Activated CD8-positive, alpha-beta T cell treated with anti-CD3 and anti-CD28 coated beads for 36 hours (primary cell): ENCODE measurements at regions of chr7 and their contacts with region 1.

Region 1: DNA sequence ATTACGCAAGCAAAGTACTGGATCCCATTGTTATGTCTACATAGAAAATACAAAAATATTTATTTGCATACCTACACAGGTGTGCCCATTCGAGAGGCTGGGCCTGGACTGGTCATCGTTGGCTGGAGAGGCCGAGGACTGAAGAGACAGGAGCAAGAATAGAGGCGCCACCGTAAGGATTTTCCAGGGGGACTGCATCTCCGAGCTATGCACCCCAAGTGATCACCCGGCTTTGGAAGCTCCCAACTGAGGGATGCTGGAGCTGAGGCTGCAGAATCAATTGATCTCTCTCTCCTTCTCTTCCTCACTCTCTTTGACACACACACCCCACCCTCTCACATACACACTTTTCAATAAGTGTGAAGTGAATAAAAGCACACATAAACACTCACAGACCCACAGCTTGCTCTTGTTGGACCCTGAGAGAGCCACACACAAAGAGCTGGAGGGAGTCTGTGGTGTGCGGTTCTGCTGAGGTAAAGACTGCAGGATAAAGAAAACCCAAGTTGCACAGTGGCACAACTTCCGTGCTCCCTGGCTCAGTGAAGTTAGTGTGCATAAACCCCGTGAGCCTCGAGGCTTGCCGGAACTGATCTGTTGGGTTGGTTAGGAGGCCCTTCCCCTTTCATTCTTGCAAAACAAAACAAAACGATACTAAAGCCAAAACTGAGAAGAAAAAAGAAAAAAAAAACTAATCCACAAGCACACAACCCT is at the start of gene AOAH:
- DNase-seq: peak; percentile 92
- ATAC-seq: peak; percentile 84
- H3K4me3 Mint-ChIP-seq: peak within 1 kb of the TSS; percentile 78
- H3K27ac Mint-ChIP-seq: peak within 1 kb of the TSS; percentile 88
- H3K4me1 Mint-ChIP-seq: peaks cover 78% of the 10 kb centered on the region
- H3K27me3 Mint-ChIP-seq: no peaks in the 10 kb centered on the region
- CTCF ChIP-seq: no peak
- total RNA-seq, gene AOAH: 10.4 to 17.1 TPM

Region 2: GRCh38 chr7:36677769-36678437 is 46.2 kb before region 1 on chr7:
- CTCF ChIA-PET with region 1: interaction called, 17 read pairs
- POLR2A ChIA-PET with region 1: interaction called, 19 read pairs
- intact Hi-C with region 1: loop called (anchors 5 kb)
- DNase-seq: peak; percentile 91
- ATAC-seq: peak; percentile 88
- H3K4me3 Mint-ChIP-seq: peak overlapping the region; percentile 56
- H3K27ac Mint-ChIP-seq: peak overlapping the region; percentile 94
- H3K4me1 Mint-ChIP-seq: peaks cover 76% of the 10 kb centered on the region
- H3K27me3 Mint-ChIP-seq: no peaks in the 10 kb centered on the region
- CTCF ChIP-seq: no peak

Region 3: GRCh38 chr7:36683695-36684357 is 40.3 kb before region 1 on chr7:
- CTCF ChIA-PET with region 1: interaction called, 17 read pairs
- POLR2A ChIA-PET with region 1: interaction called, 19 read pairs
- intact Hi-C with region 1: loop called (anchors 5 kb)
- DNase-seq: peak; percentile 33
- ATAC-seq: peak; percentile 75
- H3K4me3 Mint-ChIP-seq: no peak overlapping the region
- H3K27ac Mint-ChIP-seq: peak overlapping the region; percentile 90
- H3K4me1 Mint-ChIP-seq: peaks cover 76% of the 10 kb centered on the region
- H3K27me3 Mint-ChIP-seq: no peaks in the 10 kb centered on the region
- CTCF ChIP-seq: no peak

Region 4: DNA sequence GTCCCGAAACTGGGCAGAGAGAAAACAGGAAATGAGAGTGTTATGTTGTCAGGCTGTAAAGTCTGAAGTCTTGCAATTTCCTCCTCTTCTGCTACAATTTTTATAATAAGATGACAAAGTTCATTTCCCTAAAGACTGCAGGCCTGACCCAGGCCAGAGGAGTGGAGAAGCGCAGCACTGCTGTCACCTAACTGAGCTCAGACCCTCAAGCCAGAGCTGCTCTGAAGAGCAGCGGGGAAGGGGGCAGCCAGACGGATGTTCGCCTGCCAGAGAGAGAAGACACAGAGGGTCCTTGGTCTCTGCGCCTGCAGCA is 12.7 kb after region 1 on chr7:
- CTCF ChIA-PET with region 1: interaction called, 5 read pairs
- POLR2A ChIA-PET with region 1: interaction called, 11 read pairs
- intact Hi-C with region 1: no loop called
- DNase-seq: no peak
- ATAC-seq: peak; percentile 28
- H3K4me3 Mint-ChIP-seq: no peak overlapping the region
- H3K27ac Mint-ChIP-seq: peak overlapping the region; percentile 66
- H3K4me1 Mint-ChIP-seq: peaks cover 42% of the 10 kb centered on the region
- H3K27me3 Mint-ChIP-seq: no peaks in the 10 kb centered on the region
- CTCF ChIP-seq: no peak

Region 5: GRCh38 chr7:36784991-36785940 is 61.2 kb after region 1 on chr7:
- CTCF ChIA-PET with region 1: interaction called, 4 read pairs
- POLR2A ChIA-PET with region 1: no interaction called
- intact Hi-C with region 1: loop called (anchors 5 kb)
- DNase-seq: peak; percentile 73
- ATAC-seq: peak; percentile 86
- H3K4me3 Mint-ChIP-seq: peak overlapping the region; percentile 14
- H3K27ac Mint-ChIP-seq: peak overlapping the region; percentile 80
- H3K4me1 Mint-ChIP-seq: peaks cover 77% of the 10 kb centered on the region
- H3K27me3 Mint-ChIP-seq: no peaks in the 10 kb centered on the region
- CTCF ChIP-seq: no peak